ENCODE measurements at regions of chr2 and their contacts with region 1.

Region 1: GRCh38 chr2:127526149-127527000 is at the start of gene IWS1:
- DNase-seq: peak; percentile 93 to 98 (median 94)
- ATAC-seq: peak; percentile 94
- H3K4me3 ChIP-seq: peak within 1 kb of the TSS; percentile 80
- H3K27ac ChIP-seq: peak within 1 kb of the TSS; percentile 85
- H3K4me1 ChIP-seq: peaks cover 7 to 9% of the 10 kb centered on the region in 2 experiments; a peak in 4 of 5 replicates
- H3K27me3 ChIP-seq: peaks cover 0 to 6% of the 10 kb centered on the region in 2 experiments; a peak in 2 of 5 replicates
- CTCF ChIP-seq: peak in 2 of 3 experiments; percentile 26 to 27; a peak in 2 of 6 replicates
- EP300 ChIP-seq: peak; percentile 9; the same call in 1 of the 2 replicates
- POLR2A ChIP-seq: peak; percentile 91
- RAD21 ChIP-seq: no peak
- polyA plus RNA-seq, gene IWS1: 20.8 to 21.5 TPM

Region 2: DNA sequence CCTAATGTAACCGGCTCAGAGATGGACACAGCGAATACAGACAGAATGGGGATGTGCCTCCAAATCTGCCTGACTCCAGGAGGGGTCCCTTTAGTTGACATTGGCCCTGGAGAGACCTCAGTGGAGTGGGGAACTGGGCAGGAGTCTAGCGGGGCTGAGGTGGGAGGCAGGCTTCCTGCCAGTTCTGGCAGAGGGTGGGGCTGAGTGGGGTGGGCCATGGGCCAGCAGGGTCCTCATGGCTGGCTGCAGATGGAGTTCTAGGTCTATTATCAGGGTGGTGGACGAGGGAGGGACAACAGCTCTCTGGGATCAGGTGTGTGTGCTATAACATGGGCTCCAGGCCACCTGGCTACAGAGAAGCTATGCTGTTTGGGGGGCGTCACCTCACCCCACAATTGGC is 87.0 kb before region 1 on chr2:
- CTCF ChIA-PET with region 1: no interaction called
- POLR2A ChIA-PET with region 1: no interaction called
- in situ Hi-C with region 1: no loop called
- intact Hi-C with region 1: no loop called
- DNase-seq: no peak
- ATAC-seq: no peak
- H3K4me3 ChIP-seq: no peak overlapping the region
- H3K27ac ChIP-seq: no peak overlapping the region
- H3K4me1 ChIP-seq: no peaks in the 10 kb centered on the region
- H3K27me3 ChIP-seq: peaks cover 0 to 7% of the 10 kb centered on the region in 2 experiments; a peak in 2 of 5 replicates
- CTCF ChIP-seq: no peak
- EP300 ChIP-seq: no peak
- POLR2A ChIP-seq: no peak
- RAD21 ChIP-seq: no peak

Region 3: DNA sequence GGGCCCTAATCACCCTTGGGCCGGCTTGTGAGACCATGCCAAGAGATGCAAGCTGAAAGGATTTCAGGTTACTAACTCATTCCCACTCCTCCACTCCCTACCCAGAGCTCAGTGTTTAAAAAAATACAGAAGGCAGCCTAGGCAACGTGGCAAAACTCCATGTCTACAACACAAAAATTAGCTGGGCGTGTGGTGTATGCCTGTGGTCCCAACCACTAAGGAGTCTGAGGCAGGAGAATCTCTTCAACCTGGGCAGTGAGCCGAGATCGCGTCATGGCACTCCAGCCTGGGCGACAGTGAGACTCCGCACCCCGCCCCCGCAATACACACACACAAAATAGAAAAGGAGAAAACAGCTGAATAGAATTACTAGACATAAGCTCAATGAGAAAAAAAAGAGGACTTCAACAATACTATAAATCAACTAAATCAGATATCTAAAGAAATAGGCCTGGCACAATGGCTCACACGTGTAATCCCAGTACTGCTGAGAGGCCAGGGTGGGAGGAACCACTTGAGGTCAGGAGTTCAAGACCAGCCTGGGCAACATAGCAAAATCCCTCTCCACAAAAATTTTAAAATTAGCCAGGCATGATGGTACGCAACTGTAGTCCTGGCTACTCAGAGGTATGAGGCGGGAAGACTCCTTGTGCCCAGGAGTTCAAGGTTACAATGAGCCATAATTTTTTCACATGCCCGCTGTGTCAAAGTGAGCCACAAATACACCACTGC is 10.2 kb before region 1 on chr2:
- CTCF ChIA-PET with region 1: no interaction called
- POLR2A ChIA-PET with region 1: interaction called, 30 read pairs
- in situ Hi-C with region 1: no loop called
- intact Hi-C with region 1: no loop called
- DNase-seq: no peak
- ATAC-seq: no peak
- H3K4me3 ChIP-seq: no peak overlapping the region
- H3K27ac ChIP-seq: no peak overlapping the region
- H3K4me1 ChIP-seq: peaks cover 6% of the 10 kb centered on the region in 2 experiments; a peak in 2 of 5 replicates
- H3K27me3 ChIP-seq: no peaks in the 10 kb centered on the region
- CTCF ChIP-seq: no peak
- EP300 ChIP-seq: no peak
- POLR2A ChIP-seq: no peak
- RAD21 ChIP-seq: no peak